ENCODE measurements at regions of chr6 and their contacts with region 1.

Region 1: GRCh38 chr6:170295510-170296422 is 4.9 kb upstream of the DLL1 start:
- DNase-seq: peak in 1 of 2 experiments; percentile 53
- H3K4me3 ChIP-seq: peak overlapping the region; percentile 64
- H3K4me3 Mint-ChIP-seq: peak overlapping the region; percentile 78
- H3K27ac Mint-ChIP-seq: no peak overlapping the region
- H3K4me1 ChIP-seq: peaks cover 18% of the 10 kb centered on the region
- H3K4me1 Mint-ChIP-seq: peaks cover 11% of the 10 kb centered on the region
- H3K27me3 ChIP-seq: peaks cover 7% of the 10 kb centered on the region
- H3K27me3 Mint-ChIP-seq: peaks cover 30% of the 10 kb centered on the region
- CTCF ChIP-seq: no peak

Region 2: DNA sequence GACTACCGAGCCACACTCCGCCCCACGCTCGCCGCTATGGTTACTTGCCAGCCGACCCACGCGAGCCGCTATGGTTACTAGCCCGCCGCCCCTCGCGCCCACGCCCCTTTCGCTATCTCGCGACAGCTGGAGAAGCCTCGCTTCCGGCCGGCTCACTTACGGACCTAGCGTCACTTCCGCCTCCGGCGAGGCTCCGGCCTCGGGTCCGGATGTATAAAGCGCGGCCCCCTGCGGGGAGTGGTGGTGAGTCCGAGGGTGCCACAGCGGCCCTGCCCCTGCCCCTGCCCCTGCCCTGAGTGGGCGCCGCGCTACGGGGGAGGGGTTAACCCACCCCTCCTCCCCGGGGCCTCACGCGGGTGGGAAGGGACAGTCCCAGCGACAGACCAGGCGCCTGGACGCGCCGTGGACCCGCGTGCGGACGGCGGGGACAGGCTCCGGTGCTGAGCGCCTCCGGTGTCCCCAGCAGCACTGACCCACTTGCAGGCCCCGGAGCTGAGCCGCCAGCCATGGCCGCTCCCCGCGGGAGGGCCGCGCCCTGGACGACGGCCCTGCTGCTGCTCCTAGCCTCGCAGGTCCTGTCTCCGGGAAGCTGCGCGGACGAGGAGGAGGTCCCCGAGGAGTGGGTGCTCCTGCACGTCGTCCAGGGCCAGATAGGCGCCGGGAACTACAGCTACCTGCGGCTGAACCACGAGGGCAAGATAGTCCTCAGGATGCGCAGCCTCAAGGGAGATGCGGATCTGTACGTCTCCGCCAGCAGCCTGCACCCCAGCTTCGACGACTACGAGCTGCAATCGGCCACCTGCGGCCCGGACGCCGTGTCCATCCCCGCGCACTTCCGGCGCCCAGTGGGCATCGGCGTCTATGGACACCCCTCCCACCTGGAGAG is 593.6 kb before region 1 on chr6 and contains the starts of genes C6orf120 and WDR27:
- CTCF ChIA-PET with region 1: no interaction called
- POLR2A ChIA-PET with region 1: no interaction called
- intact Hi-C with region 1: loop called (anchors 5 kb)
- DNase-seq: peak; percentile 95 to 97
- H3K4me3 ChIP-seq: peak within 1 kb of the TSS; percentile 87
- H3K4me3 Mint-ChIP-seq: peak within 1 kb of the TSS; percentile 85
- H3K27ac Mint-ChIP-seq: peak within 1 kb of the TSS; percentile 85
- H3K4me1 ChIP-seq: peaks cover 25% of the 10 kb centered on the region
- H3K4me1 Mint-ChIP-seq: peaks cover 13% of the 10 kb centered on the region
- H3K27me3 ChIP-seq: no peaks in the 10 kb centered on the region
- H3K27me3 Mint-ChIP-seq: no peaks in the 10 kb centered on the region
- CTCF ChIP-seq: no peak
- total RNA-seq, gene C6orf120: 24.9 and 26.4 TPM in 2 replicates
- total RNA-seq, gene WDR27: 62.9 and 70.1 TPM in 2 replicates

Region 3: GRCh38 chr6:169810066-169810989 is 485.4 kb before region 1 on chr6:
- CTCF ChIA-PET with region 1: interaction called, 3 read pairs
- POLR2A ChIA-PET with region 1: no interaction called
- intact Hi-C with region 1: loop called (anchors 5 kb)
- DNase-seq: peak; percentile 94 to 95
- H3K4me3 ChIP-seq: 0 out of 2 replicates have a peak overlapping the region, but pooled peaks have one; percentile 4
- H3K4me3 Mint-ChIP-seq: peak overlapping the region; percentile 66
- H3K27ac Mint-ChIP-seq: peak overlapping the region; percentile 92
- H3K4me1 ChIP-seq: peaks cover 47% of the 10 kb centered on the region
- H3K4me1 Mint-ChIP-seq: peaks cover 56% of the 10 kb centered on the region
- H3K27me3 ChIP-seq: no peaks in the 10 kb centered on the region
- H3K27me3 Mint-ChIP-seq: no peaks in the 10 kb centered on the region
- CTCF ChIP-seq: no peak

Region 4: DNA sequence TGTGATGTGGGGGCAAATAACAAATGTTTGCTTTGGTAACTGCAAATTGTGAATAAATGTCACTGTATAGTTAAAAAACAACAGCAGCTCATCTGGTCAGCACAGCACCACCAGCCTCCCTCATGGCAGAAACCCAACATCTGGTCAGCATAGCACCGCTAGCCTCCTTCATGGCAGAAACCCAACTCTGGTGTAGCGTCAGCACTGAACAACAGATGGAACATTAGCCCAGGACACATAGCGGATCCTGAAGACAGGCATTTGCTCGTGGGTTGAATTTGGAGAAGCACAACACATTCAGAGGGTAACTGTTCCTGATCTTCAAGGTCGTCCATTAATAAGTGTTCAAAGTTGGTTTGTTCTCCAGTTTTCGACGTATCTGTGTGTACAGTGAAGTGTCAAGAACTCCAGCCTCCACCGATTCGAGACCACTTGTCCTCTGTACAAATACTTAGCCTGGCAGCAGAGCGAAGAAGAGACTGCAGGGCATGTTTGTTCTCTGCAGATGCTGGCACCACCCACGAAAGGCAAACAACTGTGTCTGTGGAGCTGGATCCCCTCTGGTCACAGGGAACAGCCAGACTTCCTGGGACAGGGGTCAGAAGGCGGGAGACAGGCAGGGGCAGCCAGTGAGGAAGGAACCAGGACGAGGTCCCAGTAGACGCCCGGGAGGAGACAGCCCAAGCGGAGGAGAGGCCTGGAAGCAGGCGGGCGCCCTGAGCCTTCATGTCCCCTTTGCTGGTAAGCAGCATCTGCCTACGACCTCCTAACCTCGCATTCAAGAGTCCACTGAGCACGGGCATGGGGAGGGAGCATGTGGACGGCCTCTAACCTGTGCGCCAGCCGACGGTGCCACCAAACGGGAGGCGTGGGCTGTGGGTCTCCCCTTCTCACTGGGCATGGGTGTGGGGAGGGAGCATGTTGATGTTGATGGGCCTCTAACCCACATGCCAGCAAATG is 270.5 kb before region 1 on chr6:
- CTCF ChIA-PET with region 1: no interaction called
- POLR2A ChIA-PET with region 1: interaction called, 3 read pairs
- intact Hi-C with region 1: loop called (anchors 5 kb)
- DNase-seq: peak in 1 of 2 experiments; percentile 20
- H3K4me3 ChIP-seq: no peak overlapping the region
- H3K4me3 Mint-ChIP-seq: no peak overlapping the region
- H3K27ac Mint-ChIP-seq: peak overlapping the region; percentile 75
- H3K4me1 ChIP-seq: peaks cover 32% of the 10 kb centered on the region
- H3K4me1 Mint-ChIP-seq: peaks cover 10% of the 10 kb centered on the region
- H3K27me3 ChIP-seq: no peaks in the 10 kb centered on the region
- H3K27me3 Mint-ChIP-seq: no peaks in the 10 kb centered on the region
- CTCF ChIP-seq: no peak

Region 5: DNA sequence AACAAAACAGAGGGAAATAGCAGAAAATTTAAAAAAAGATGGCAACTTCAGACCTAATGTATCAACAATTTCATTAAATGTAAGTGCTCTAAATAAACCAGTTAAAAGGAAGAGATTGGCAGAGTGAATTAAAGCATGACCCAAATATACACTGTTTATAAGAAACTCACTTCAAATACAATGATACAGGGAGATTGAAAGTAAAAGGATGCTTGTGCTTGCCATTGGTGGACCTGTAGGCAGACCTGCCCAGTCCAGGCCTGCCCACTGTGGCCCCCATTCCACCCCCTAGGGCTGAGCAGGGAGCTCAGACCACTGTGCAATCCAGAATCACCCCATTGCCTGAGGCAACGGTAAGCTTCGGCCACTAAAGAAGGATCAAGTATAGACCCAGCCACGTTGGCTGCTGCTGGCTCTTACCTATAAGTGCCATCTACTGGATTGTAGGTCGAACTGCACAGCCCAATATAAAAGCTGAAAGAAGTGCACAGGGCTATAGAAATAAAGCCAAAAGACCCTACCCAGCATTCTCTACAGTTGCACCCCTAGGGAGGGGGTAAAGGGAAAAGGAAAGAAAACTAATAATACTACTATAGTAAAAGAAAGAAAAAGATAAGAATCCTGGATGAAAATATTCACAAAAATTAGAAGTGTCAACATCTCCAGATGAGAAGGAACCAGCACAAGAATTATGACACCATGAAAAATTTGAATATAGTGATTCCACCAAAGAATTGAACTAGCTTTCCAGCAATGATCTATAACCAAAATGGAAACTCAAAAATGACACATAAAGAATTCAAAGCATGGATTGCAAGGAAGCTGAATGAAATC is 221.2 kb after region 1 on chr6:
- CTCF ChIA-PET with region 1: interaction called, 3 read pairs
- POLR2A ChIA-PET with region 1: no interaction called
- intact Hi-C with region 1: loop called (anchors 5 kb)
- DNase-seq: peak; percentile 65 to 72
- H3K4me3 ChIP-seq: no peak overlapping the region
- H3K4me3 Mint-ChIP-seq: no peak overlapping the region
- H3K27ac Mint-ChIP-seq: no peak overlapping the region
- H3K4me1 ChIP-seq: no peaks in the 10 kb centered on the region
- H3K4me1 Mint-ChIP-seq: no peaks in the 10 kb centered on the region
- H3K27me3 ChIP-seq: no peaks in the 10 kb centered on the region
- H3K27me3 Mint-ChIP-seq: no peaks in the 10 kb centered on the region
- CTCF ChIP-seq: peak; percentile 67 to 86

Measured in Caco-2 (cell line).